MCF 10A (cell line): ENCODE measurements at regions of chr20 and their contacts with region 1.

Region 1: GRCh38 chr20:54093423-54094267 is 23.3 kb upstream of the BCAS1 start:
- DNase-seq: no peak
- H3K4me3 Mint-ChIP-seq: no peak overlapping the region
- H3K27ac Mint-ChIP-seq: no peak overlapping the region
- H3K4me1 Mint-ChIP-seq: no peaks in the 10 kb centered on the region
- H3K27me3 Mint-ChIP-seq: no peaks in the 10 kb centered on the region
- CTCF ChIP-seq: no peak

Region 2: GRCh38 chr20:53678990-53679596 is 414.6 kb before region 1 on chr20:
- CTCF ChIA-PET with region 1: no interaction called
- POLR2A ChIA-PET with region 1: no interaction called
- intact Hi-C with region 1: no loop called
- DNase-seq: no peak
- H3K4me3 Mint-ChIP-seq: no peak overlapping the region
- H3K27ac Mint-ChIP-seq: no peak overlapping the region
- H3K4me1 Mint-ChIP-seq: peaks cover 5% of the 10 kb centered on the region
- H3K27me3 Mint-ChIP-seq: no peaks in the 10 kb centered on the region
- CTCF ChIP-seq: no peak

Region 3: GRCh38 chr20:53952491-53953096 is 141.1 kb before region 1 on chr20:
- CTCF ChIA-PET with region 1: no interaction called
- POLR2A ChIA-PET with region 1: no interaction called
- intact Hi-C with region 1: no loop called
- DNase-seq: no peak
- H3K4me3 Mint-ChIP-seq: no peak overlapping the region
- H3K27ac Mint-ChIP-seq: no peak overlapping the region
- H3K4me1 Mint-ChIP-seq: peaks cover 20% of the 10 kb centered on the region
- H3K27me3 Mint-ChIP-seq: no peaks in the 10 kb centered on the region
- CTCF ChIP-seq: no peak

Region 4: GRCh38 chr20:53975761-53976160 is 117.9 kb before region 1 on chr20:
- CTCF ChIA-PET with region 1: no interaction called
- POLR2A ChIA-PET with region 1: no interaction called
- intact Hi-C with region 1: no loop called
- DNase-seq: no peak
- H3K4me3 Mint-ChIP-seq: no peak overlapping the region
- H3K27ac Mint-ChIP-seq: no peak overlapping the region
- H3K4me1 Mint-ChIP-seq: no peaks in the 10 kb centered on the region
- H3K27me3 Mint-ChIP-seq: no peaks in the 10 kb centered on the region
- CTCF ChIP-seq: no peak

Region 5: GRCh38 chr20:54115151-54115854 is 21.7 kb after region 1 on chr20:
- CTCF ChIA-PET with region 1: interaction called, 22 read pairs
- POLR2A ChIA-PET with region 1: interaction called, 3 read pairs
- intact Hi-C with region 1: no loop called
- DNase-seq: peak; percentile 13
- H3K4me3 Mint-ChIP-seq: no peak overlapping the region
- H3K27ac Mint-ChIP-seq: peak overlapping the region; percentile 81
- H3K4me1 Mint-ChIP-seq: peaks cover 18% of the 10 kb centered on the region
- H3K27me3 Mint-ChIP-seq: no peaks in the 10 kb centered on the region
- CTCF ChIP-seq: no peak

Region 6: DNA sequence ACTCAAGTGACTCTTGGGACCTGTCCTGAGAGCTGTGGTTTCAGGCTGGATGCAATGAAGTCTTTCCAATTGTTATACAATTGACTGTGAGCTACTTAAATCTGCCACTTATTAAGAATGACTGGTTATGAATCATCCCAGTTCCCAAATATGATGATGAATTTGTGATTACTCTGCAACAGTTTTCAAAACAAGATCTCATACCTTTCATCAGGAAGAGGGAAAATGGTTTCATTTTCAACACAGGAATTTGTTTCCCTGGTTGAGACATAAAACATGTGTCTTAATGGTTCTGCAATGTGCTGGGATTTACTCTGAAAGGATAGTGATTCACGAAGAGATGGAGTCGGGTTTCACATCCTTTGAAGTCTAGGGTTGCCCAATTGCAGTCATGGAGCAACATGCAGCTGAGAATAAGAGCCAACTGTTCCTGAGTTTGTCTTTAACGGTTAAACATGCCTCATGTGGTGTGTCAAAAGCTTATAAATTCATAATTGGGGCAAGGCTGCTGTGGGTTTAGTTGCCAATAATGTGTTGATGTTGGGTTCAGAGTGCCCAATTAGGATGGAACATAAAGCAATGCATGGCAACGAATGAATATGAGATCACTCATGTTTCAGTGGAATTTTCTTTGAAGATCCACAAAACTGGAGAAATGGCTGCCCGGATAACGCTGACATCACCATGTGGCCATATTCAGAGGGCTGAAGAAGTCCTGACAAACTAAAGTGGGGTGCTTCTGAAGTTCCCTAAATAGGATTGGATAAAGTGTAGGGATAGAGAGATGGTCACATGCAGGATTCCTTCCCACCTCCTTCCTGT is 39.2 kb after region 1 on chr20:
- CTCF ChIA-PET with region 1: interaction called, 21 read pairs
- POLR2A ChIA-PET with region 1: interaction called, 3 read pairs
- intact Hi-C with region 1: no loop called
- DNase-seq: peak; percentile 99
- H3K4me3 Mint-ChIP-seq: no peak overlapping the region
- H3K27ac Mint-ChIP-seq: no peak overlapping the region
- H3K4me1 Mint-ChIP-seq: peaks cover 8% of the 10 kb centered on the region
- H3K27me3 Mint-ChIP-seq: no peaks in the 10 kb centered on the region
- CTCF ChIP-seq: no peak

Region 7: GRCh38 chr20:54167909-54168872 is 74.5 kb after region 1 on chr20:
- CTCF ChIA-PET with region 1: interaction called, 20 read pairs
- POLR2A ChIA-PET with region 1: no interaction called
- intact Hi-C with region 1: no loop called
- DNase-seq: peak; percentile 86
- H3K4me3 Mint-ChIP-seq: peak overlapping the region; percentile 28
- H3K27ac Mint-ChIP-seq: peak overlapping the region; percentile 50
- H3K4me1 Mint-ChIP-seq: peaks cover 18% of the 10 kb centered on the region
- H3K27me3 Mint-ChIP-seq: no peaks in the 10 kb centered on the region
- CTCF ChIP-seq: no peak

Region 8: DNA sequence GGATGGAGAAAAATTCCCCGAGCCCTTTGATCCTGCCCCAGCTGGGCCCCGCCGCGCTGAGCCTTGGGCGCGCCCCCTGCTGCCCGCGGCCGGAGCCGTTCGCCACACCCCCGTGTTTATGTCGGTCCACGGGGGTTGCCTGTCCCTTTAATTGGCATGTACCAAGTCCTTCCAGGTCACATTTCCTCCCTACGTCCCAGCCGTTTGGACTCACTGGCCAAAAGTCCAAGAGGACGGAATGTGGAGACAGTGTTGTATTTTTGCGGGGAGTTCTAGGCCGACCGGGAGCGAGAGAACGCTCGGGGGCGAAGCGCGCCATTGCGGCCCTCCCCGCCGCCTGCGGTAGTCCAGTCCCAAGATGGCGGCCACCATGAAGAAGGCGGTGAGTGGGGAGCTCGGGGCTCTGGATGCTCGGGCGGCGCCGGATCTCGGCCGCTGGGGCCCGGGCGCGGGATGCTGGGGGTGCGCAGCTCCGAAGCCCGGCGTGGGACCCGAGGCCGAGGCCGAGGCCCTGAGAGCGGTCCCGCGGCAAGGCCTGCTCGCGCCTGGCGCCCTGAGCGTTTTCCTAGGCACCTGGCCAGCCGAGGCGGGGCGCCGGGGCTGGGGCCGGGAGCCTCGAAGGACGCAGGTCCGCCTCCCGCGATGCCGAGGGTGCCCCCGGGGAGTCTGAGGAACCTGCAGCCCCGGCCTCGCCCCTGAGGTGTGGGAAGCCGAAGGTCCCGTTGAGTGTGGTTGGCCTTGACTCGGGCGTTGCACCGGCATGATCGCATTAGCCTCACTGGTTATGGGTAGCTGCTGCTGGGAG is 114.3 kb after region 1 on chr20 and contains the start of gene PFDN4:
- CTCF ChIA-PET with region 1: interaction called, 1,436 read pairs
- POLR2A ChIA-PET with region 1: interaction called, 12 read pairs
- intact Hi-C with region 1: no loop called
- DNase-seq: peak; percentile 85
- H3K4me3 Mint-ChIP-seq: peak within 1 kb of the TSS; percentile 76
- H3K27ac Mint-ChIP-seq: peak within 1 kb of the TSS; percentile 100
- H3K4me1 Mint-ChIP-seq: peaks cover 16% of the 10 kb centered on the region
- H3K27me3 Mint-ChIP-seq: no peaks in the 10 kb centered on the region
- CTCF ChIP-seq: peak; percentile 73
- total RNA-seq, gene PFDN4: 37.0 and 45.4 TPM in 2 replicates

Region 9: DNA sequence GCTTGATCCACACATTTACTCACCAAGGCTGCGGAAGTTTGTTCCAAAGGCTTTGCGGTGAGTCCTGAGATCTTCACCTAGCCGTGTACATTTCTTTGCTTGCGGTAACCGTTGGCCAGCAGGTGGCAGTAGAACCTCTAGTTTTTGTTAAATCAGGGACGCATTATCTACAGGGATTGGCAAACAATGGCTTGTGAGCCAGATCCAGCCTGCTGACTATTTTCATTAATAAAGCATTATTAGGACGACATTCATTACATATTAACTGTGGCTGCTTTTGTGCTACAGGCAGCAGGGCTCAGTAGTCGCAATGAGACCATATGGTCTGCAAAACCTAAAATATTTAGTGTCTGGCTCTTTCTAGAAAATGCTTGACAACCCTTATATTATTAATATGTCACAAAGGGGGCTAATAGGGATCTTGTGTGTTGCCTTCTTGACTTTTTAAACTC is 555.9 kb after region 1 on chr20:
- CTCF ChIA-PET with region 1: interaction called, 11 read pairs
- POLR2A ChIA-PET with region 1: no interaction called
- intact Hi-C with region 1: loop called (anchors 5 kb)
- DNase-seq: peak; percentile 82
- H3K4me3 Mint-ChIP-seq: no peak overlapping the region
- H3K27ac Mint-ChIP-seq: no peak overlapping the region
- H3K4me1 Mint-ChIP-seq: no peaks in the 10 kb centered on the region
- H3K27me3 Mint-ChIP-seq: peaks cover 39% of the 10 kb centered on the region
- CTCF ChIP-seq: peak; percentile 71